ENCODE measurements at regions of chr12 and their contacts with region 1.

Region 1: DNA sequence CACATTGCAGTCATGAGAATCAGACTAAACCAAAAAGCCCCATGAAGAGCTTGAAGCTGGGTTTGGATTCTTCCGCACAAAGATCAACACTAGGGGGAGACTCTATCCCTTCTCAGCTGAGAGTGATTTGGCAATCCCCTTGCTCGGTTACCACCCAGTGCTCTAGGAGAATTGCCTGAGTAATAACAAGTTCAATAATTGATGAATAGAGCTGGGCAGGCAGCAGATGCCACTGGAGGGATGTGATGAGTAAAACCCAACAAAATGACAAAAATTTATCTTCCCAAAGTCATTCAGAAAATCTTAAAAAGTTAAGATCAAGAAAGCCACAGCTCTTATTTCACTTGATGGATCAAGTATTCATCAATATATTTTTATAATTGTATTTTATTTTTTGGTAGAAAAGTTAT is 185.6 kb upstream of the ARID2 start:
- DNase-seq: peak in 8 of 9 donors; percentile 22 to 74 (median 61)
- ATAC-seq: peak; percentile 97
- H3K4me3 ChIP-seq: no peak overlapping the region
- H3K4me3 Mint-ChIP-seq: no peak overlapping the region
- H3K27ac ChIP-seq: no peak overlapping the region
- H3K27ac Mint-ChIP-seq: peak overlapping the region in 1 of 9 donors; percentile 33
- H3K4me1 ChIP-seq: no peaks in the 10 kb centered on the region
- H3K4me1 Mint-ChIP-seq: peaks cover 0 to 6% (median 0%) of the 10 kb centered on the region in 7 donors
- H3K27me3 ChIP-seq: no peaks in the 10 kb centered on the region
- H3K27me3 Mint-ChIP-seq: peaks cover 0 to 35% (median 0%) of the 10 kb centered on the region in 5 donors

Region 2: GRCh38 chr12:45721954-45722353 is 178.0 kb after region 1 on chr12:
- CTCF ChIA-PET with region 1: interaction called, 23 read pairs
- POLR2A ChIA-PET with region 1: interaction called, 3 read pairs
- intact Hi-C with region 1: loop called (anchors 1 kb)
- DNase-seq: no peak
- ATAC-seq: no peak
- H3K4me3 ChIP-seq: no peak overlapping the region
- H3K4me3 Mint-ChIP-seq: peak overlapping the region in 9 of 10 donors; percentile 10 to 88 (median 63)
- H3K27ac ChIP-seq: no peak overlapping the region
- H3K27ac Mint-ChIP-seq: peak overlapping the region in 4 of 9 donors; percentile 16 to 63 (median 45)
- H3K4me1 ChIP-seq: peaks cover 24 to 25% of the 10 kb centered on the region in 2 donors
- H3K4me1 Mint-ChIP-seq: peaks cover 35 to 83% (median 73%) of the 10 kb centered on the region in 7 donors
- H3K27me3 ChIP-seq: no peaks in the 10 kb centered on the region
- H3K27me3 Mint-ChIP-seq: no peaks in the 10 kb centered on the region

Region 3: GRCh38 chr12:45745861-45746277 is 202.0 kb after region 1 on chr12:
- CTCF ChIA-PET with region 1: interaction called, 20 read pairs
- POLR2A ChIA-PET with region 1: no interaction called
- intact Hi-C with region 1: loop called (anchors 1 kb)
- DNase-seq: peak in 6 of 9 donors; percentile 20 to 58 (median 45)
- ATAC-seq: peak; percentile 77
- H3K4me3 ChIP-seq: no peak overlapping the region
- H3K4me3 Mint-ChIP-seq: peak overlapping the region in 3 of 10 donors; percentile 12 to 33 (median 20)
- H3K27ac ChIP-seq: no peak overlapping the region
- H3K27ac Mint-ChIP-seq: peak overlapping the region in 2 of 9 donors; percentile 0 to 47
- H3K4me1 ChIP-seq: peaks cover 13 to 28% of the 10 kb centered on the region in 2 donors
- H3K4me1 Mint-ChIP-seq: peaks cover 44 to 83% (median 77%) of the 10 kb centered on the region in 7 donors
- H3K27me3 ChIP-seq: no peaks in the 10 kb centered on the region
- H3K27me3 Mint-ChIP-seq: no peaks in the 10 kb centered on the region

Region 4: DNA sequence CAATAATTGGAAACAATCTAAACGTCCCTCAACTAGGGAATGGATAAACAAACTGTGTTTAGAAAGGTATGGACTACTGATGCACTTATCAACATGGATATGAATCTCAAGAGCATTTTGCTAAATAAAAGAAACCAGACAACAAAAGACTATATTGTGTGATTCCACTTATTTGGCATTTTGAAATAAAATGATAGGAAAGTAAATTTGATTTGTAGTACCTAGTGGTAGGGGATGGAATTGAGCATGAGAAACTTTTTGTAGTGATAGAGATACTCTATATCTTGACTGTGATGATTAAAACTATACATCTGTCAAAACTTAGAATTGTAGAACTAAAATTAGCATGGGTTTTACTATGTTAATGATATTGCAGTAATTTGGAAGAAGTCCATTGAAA is 272.7 kb after region 1 on chr12:
- CTCF ChIA-PET with region 1: no interaction called
- POLR2A ChIA-PET with region 1: no interaction called
- intact Hi-C with region 1: loop called in 1 of 2 experiments (anchors 5 kb)
- DNase-seq: no peak
- ATAC-seq: no peak
- H3K4me3 ChIP-seq: no peak overlapping the region
- H3K4me3 Mint-ChIP-seq: no peak overlapping the region
- H3K27ac ChIP-seq: no peak overlapping the region
- H3K27ac Mint-ChIP-seq: peak overlapping the region in 1 of 9 donors; percentile 73
- H3K4me1 ChIP-seq: no peaks in the 10 kb centered on the region
- H3K4me1 Mint-ChIP-seq: peaks cover 0 to 8% (median 3%) of the 10 kb centered on the region in 7 donors
- H3K27me3 ChIP-seq: no peaks in the 10 kb centered on the region
- H3K27me3 Mint-ChIP-seq: no peaks in the 10 kb centered on the region

Region 5: GRCh38 chr12:45878630-45879255 is 334.8 kb after region 1 on chr12:
- CTCF ChIA-PET with region 1: no interaction called
- POLR2A ChIA-PET with region 1: no interaction called
- intact Hi-C with region 1: loop called in 1 of 2 experiments (anchors 10 kb)
- DNase-seq: peak in 1 of 9 donors; percentile 32
- ATAC-seq: peak; percentile 61
- H3K4me3 ChIP-seq: no peak overlapping the region
- H3K4me3 Mint-ChIP-seq: peak overlapping the region in 2 of 10 donors; percentile 53 to 73
- H3K27ac ChIP-seq: no peak overlapping the region
- H3K27ac Mint-ChIP-seq: peak overlapping the region in 8 of 9 donors; percentile 6 to 91 (median 31)
- H3K4me1 ChIP-seq: peaks cover 0 to 21% of the 10 kb centered on the region in 2 donors
- H3K4me1 Mint-ChIP-seq: peaks cover 22 to 61% (median 39%) of the 10 kb centered on the region in 7 donors
- H3K27me3 ChIP-seq: no peaks in the 10 kb centered on the region
- H3K27me3 Mint-ChIP-seq: no peaks in the 10 kb centered on the region

Region 6: GRCh38 chr12:45893240-45893639 is 349.3 kb after region 1 on chr12:
- CTCF ChIA-PET with region 1: no interaction called
- POLR2A ChIA-PET with region 1: no interaction called
- intact Hi-C with region 1: loop called in 1 of 2 experiments (anchors 5 kb)
- DNase-seq: no peak
- ATAC-seq: no peak
- H3K4me3 ChIP-seq: no peak overlapping the region
- H3K4me3 Mint-ChIP-seq: no peak overlapping the region
- H3K27ac ChIP-seq: no peak overlapping the region
- H3K27ac Mint-ChIP-seq: peak overlapping the region in 1 of 9 donors; percentile 45
- H3K4me1 ChIP-seq: peaks cover 0 to 26% of the 10 kb centered on the region in 2 donors
- H3K4me1 Mint-ChIP-seq: peaks cover 19 to 58% (median 48%) of the 10 kb centered on the region in 7 donors
- H3K27me3 ChIP-seq: no peaks in the 10 kb centered on the region
- H3K27me3 Mint-ChIP-seq: no peaks in the 10 kb centered on the region

Region 7: DNA sequence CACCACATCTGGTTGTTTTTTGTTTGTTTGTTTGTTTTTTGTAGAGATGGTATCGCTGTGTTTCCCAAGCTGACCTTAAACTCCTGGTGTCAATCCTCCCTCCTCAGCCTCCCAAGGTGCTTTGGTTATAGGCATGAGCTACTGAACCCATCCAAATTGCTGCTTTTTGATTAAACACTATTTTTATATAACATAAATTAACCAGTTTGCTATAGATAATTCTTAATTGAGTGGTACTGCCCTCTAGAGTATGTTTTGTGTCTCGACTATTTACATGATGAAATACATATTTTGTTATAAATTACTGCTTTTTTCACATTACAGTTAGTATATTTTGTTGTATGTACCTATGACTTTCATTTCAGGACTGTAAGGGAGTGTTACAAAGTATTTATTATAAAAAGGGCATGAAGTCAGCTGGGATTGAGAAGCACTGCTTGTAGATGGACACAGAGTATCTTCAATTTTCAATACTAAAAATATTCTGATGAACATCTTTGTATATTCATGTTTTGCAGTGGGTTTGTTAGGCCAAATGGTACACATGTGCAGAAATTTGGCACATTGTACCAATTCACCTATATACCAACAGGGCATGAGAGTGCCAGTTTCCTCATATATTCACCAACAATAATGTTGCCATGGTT is 461.4 kb after region 1 on chr12:
- CTCF ChIA-PET with region 1: no interaction called
- POLR2A ChIA-PET with region 1: no interaction called
- intact Hi-C with region 1: loop called (anchors 1 to 5 kb)
- DNase-seq: peak in 2 of 9 donors; percentile 13 to 19
- ATAC-seq: no peak
- H3K4me3 ChIP-seq: no peak overlapping the region
- H3K4me3 Mint-ChIP-seq: no peak overlapping the region
- H3K27ac ChIP-seq: no peak overlapping the region
- H3K27ac Mint-ChIP-seq: peak overlapping the region in 1 of 9 donors; percentile 47
- H3K4me1 ChIP-seq: no peaks in the 10 kb centered on the region
- H3K4me1 Mint-ChIP-seq: no peaks in the 10 kb centered on the region
- H3K27me3 ChIP-seq: no peaks in the 10 kb centered on the region
- H3K27me3 Mint-ChIP-seq: peaks cover 0 to 13% (median 0%) of the 10 kb centered on the region in 5 donors

Measured in naive thymus-derived CD4-positive, alpha-beta T cell (primary cell).